ENCODE measurements at regions of chr17 and their contacts with region 1.

Region 1: DNA sequence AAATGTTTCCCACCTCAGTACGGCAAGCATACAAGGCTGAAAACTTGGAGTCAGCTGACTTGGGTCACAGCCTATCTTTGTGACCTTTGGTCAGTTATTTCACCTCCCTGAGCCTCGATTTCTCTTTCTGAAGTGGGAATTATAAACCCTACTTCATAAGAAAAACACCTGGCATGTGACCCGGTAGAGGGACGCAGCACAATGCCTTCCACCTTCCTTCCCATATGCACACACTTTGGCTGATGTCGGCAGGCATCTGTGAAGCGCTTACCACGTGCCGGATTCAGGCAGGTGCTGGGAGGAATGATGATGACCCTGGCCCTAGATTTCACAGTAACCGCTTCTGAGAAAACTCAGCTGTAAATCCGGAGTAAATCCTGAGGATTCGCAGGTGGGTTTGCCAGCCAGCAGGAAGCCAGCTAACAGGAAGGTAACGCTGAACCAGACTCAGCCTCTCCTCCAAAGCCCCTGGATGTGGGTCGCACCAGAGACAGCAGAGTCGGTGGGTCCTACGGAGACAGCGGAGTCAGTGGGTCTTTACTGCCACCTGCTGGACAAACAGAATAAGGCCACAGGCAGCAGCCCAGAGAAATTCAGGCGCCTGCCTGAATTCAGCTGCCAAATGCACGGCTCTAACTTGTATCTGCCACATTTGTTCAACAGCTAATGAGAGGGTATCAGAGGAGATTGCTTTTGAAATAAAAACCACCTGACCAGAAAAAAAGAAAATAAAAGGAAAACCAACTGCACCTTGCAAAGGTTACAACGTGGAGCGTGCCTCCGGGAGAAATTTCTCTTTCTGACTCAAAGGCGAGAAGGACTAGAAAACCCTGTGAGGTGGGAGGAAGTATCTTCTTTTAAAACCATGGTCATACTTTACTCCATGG is 16.6 kb downstream of the COPRS start:
- DNase-seq: no peak
- ATAC-seq: peak; percentile 96
- H3K4me3 ChIP-seq: no peak overlapping the region
- H3K27ac ChIP-seq: no peak overlapping the region
- H3K4me1 ChIP-seq: no peaks in the 10 kb centered on the region
- H3K27me3 ChIP-seq: no peaks in the 10 kb centered on the region
- CTCF ChIP-seq: peak; percentile 90 to 95 (median 92)
- EP300 ChIP-seq: no peak
- POLR2A ChIP-seq: no peak
- RAD21 ChIP-seq: peak; percentile 96

Region 2: DNA sequence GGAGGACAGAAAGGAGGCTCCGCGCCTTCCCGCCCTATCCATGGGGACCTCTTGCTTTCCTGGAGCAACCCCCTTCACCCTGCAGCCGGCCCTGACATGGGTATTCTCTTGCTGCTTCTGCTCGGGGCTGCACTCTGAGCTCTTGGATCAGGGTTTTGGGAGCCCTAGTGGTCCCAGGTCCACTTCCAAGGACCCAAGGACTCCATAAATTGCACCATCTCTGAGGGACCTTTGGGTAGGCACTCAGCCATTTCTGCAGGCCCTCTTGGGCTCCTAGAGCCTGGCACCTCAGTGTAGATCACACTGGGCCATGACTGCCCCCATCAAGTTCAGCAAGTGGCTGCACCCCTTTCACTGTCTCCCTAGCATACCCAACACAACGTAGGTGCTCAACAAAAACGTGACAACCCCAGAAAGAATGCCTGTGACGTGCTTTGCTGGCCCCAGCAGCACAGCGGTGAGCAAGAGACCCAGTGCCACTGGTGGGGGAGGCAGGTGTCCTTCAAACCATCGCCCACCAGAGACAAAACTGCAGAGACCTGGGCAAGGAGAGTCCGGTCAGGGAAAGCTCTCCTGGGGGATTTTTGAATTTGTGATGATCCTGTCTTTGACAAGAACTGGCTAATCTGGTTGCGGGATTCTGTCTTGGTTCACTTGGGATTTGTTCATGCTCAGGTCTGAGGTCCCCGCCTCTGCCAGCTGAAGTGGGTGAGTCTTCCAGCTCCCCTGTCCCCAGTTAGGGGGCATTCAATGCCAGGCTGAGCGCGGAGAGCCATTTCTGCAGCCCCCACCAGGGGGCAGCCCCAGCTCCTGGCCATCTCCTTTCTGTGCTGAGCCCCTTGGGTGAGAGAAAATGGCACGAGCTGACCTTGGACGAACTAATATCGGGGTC is 453.4 kb before region 1 on chr17:
- CTCF ChIA-PET with region 1: interaction called, 4 read pairs
- POLR2A ChIA-PET with region 1: no interaction called
- RAD21 ChIA-PET with region 1: no interaction called
- SMC1A ChIA-PET with region 1: interaction called, 3 read pairs
- in situ Hi-C with region 1: no loop called
- intact Hi-C with region 1: loop called (anchors 5 kb)
- DNase-seq: no peak
- ATAC-seq: peak; percentile 85
- H3K4me3 ChIP-seq: no peak overlapping the region
- H3K27ac ChIP-seq: no peak overlapping the region
- H3K4me1 ChIP-seq: no peaks in the 10 kb centered on the region
- H3K27me3 ChIP-seq: peaks cover 12% of the 10 kb centered on the region in 2 experiments
- CTCF ChIP-seq: peak; percentile 57 to 88 (median 71)
- EP300 ChIP-seq: no peak
- POLR2A ChIP-seq: no peak
- RAD21 ChIP-seq: peak; percentile 58

Region 3: DNA sequence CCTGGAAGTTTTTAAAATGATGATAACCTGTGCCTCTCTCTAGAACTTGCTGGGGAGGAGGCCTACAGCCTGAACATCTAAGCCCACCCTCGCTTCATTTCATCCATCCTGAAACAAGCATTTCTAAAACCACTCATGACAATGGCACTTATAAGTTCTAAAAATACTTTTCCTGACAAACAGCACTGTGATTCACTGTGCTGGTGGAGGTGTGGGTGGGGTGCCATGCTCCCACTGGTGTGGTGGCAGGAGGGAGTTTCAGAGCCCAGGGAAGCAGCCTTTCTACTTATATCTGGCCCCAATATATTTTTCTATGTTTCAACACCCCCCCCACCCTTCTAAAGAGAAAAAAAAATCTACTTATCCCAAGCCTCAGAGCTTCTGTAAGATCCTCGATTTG is 398.4 kb before region 1 on chr17:
- CTCF ChIA-PET with region 1: interaction called, 21 read pairs
- POLR2A ChIA-PET with region 1: no interaction called
- RAD21 ChIA-PET with region 1: interaction called, 6 read pairs
- SMC1A ChIA-PET with region 1: interaction called, 17 read pairs
- in situ Hi-C with region 1: loop called (anchors 5 kb)
- intact Hi-C with region 1: no loop called
- DNase-seq: no peak
- ATAC-seq: no peak
- H3K4me3 ChIP-seq: no peak overlapping the region
- H3K27ac ChIP-seq: no peak overlapping the region
- H3K4me1 ChIP-seq: no peaks in the 10 kb centered on the region
- H3K27me3 ChIP-seq: no peaks in the 10 kb centered on the region
- CTCF ChIP-seq: no peak
- EP300 ChIP-seq: no peak
- POLR2A ChIP-seq: no peak
- RAD21 ChIP-seq: no peak

Region 4: GRCh38 chr17:31533546-31534155 is 308.8 kb before region 1 on chr17:
- CTCF ChIA-PET with region 1: interaction called, 85 read pairs
- POLR2A ChIA-PET with region 1: interaction called, 9 read pairs
- RAD21 ChIA-PET with region 1: interaction called, 65 read pairs
- SMC1A ChIA-PET with region 1: interaction called, 78 read pairs
- in situ Hi-C with region 1: loop called (anchors 10 kb)
- intact Hi-C with region 1: loop called (anchors 5 kb)
- DNase-seq: no peak
- ATAC-seq: no peak
- H3K4me3 ChIP-seq: no peak overlapping the region
- H3K27ac ChIP-seq: no peak overlapping the region
- H3K4me1 ChIP-seq: peaks cover 34% of the 10 kb centered on the region
- H3K27me3 ChIP-seq: no peaks in the 10 kb centered on the region
- CTCF ChIP-seq: peak; percentile 7 to 44 (median 16); a peak in 2 of 6 replicates
- EP300 ChIP-seq: no peak
- POLR2A ChIP-seq: no peak
- RAD21 ChIP-seq: peak; percentile 36; the same call in 1 of the 2 replicates

Region 5: DNA sequence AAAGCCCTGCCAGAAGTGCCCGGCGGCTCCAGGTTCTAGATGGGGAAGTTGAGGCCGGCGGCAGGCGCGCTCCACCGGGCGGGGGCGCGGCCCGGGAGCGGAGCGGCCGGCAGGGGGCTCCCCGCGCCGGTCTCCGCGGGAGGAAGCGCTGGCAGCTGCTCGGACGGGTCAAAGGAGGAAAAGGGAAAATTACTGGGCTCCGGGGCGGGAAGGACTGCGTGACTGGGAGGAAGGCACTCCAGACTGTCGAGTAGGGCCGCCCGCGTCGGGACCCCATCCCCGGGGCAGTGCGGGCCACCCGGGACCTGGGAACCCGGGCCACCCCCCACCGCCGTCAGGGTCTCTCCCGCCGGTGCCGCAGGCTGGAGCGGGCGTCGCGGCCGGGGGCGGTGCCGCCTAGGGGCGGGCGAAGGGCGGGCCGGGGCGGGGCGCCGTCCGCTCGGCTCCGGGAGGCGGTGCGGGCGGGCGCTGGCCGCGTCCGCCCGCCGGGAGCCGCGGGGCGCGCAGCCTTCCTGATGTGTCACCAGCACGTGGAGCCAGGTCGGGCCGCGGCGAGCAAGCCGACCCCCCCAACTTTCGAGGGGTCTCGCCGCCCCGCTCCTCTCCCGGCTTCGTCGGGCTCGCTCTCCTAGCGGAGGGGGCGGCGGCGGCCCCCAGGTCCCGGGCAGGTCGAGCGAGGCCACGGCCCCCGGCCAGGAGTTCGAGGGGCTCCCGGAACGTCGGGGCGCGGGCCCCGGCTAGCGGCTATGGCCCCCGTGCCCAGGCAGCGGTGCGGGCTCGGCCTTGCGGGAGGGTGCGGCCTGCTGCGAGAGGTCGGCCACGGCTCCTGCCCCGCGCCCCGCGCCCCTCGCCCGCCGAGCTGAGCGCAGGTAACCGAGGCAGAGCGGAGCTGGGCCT is 283.4 kb before region 1 on chr17:
- CTCF ChIA-PET with region 1: interaction called, 55 read pairs
- POLR2A ChIA-PET with region 1: no interaction called
- RAD21 ChIA-PET with region 1: interaction called, 14 read pairs
- SMC1A ChIA-PET with region 1: interaction called, 15 read pairs
- in situ Hi-C with region 1: loop called (anchors 5 kb)
- intact Hi-C with region 1: loop called (anchors 1 kb)
- DNase-seq: no peak
- ATAC-seq: peak; percentile 96
- H3K4me3 ChIP-seq: peak overlapping the region; percentile 32; the same call in 1 of the 2 replicates
- H3K27ac ChIP-seq: no peak overlapping the region
- H3K4me1 ChIP-seq: no peaks in the 10 kb centered on the region
- H3K27me3 ChIP-seq: peaks cover 0 to 7% of the 10 kb centered on the region in 2 experiments; a peak in 3 of 4 replicates
- CTCF ChIP-seq: peak; percentile 60 to 68 (median 61); a peak in 5 of 6 replicates
- EP300 ChIP-seq: no peak
- POLR2A ChIP-seq: no peak
- RAD21 ChIP-seq: peak; percentile 53; the same call in 1 of the 2 replicates

Region 6: DNA sequence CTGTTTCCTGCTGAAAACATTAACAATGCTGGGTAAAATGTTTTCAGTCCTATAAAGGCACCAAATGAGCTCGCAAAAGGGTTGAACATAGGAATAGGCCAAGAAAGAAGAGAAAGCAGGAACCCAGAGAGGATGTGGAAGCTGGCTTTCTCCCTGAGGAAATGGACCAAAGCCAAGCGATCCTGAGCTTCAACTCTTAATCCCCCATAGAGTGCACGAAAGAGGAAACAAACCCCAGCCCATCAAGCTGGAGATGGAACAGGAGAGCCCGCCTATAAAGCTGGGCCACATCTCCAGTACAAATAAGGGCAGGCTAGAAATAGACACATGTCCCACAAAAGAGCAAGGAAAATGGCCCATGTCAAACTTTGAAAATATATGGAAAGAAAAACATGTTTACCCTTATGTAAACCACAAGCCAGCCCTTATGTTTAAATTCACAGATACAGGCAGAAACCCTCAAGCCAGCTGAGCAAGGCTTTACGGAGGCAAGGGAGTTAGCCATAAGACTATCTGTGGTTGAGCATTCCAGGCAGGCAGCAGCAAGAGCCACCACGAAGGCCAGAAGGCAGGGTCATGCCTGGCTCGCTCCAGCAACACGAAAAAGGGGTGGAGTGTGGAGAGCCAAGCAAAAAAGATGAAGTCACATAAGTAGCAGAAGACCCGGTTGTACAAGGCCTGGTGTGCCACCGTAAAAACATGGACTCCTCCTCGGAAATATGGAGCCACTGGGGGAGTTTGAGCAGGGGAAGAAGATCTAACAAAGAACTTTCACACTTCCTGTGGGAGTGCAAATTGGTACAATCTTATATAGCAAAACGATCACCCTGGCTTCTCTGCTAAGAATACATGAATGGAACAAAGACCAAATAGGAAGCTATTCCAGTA is 11.2 kb before region 1 on chr17:
- CTCF ChIA-PET with region 1: interaction called, 12 read pairs
- POLR2A ChIA-PET with region 1: no interaction called
- RAD21 ChIA-PET with region 1: interaction called, 3 read pairs
- SMC1A ChIA-PET with region 1: interaction called, 3 read pairs
- in situ Hi-C with region 1: no loop called
- intact Hi-C with region 1: no loop called
- DNase-seq: no peak
- ATAC-seq: no peak
- H3K4me3 ChIP-seq: no peak overlapping the region
- H3K27ac ChIP-seq: no peak overlapping the region
- H3K4me1 ChIP-seq: peaks cover 8% of the 10 kb centered on the region
- H3K27me3 ChIP-seq: no peaks in the 10 kb centered on the region
- CTCF ChIP-seq: no peak
- EP300 ChIP-seq: no peak
- POLR2A ChIP-seq: no peak
- RAD21 ChIP-seq: no peak

Region 7: GRCh38 chr17:32461853-32462617 is 619.6 kb after region 1 on chr17:
- CTCF ChIA-PET with region 1: no interaction called
- POLR2A ChIA-PET with region 1: no interaction called
- RAD21 ChIA-PET with region 1: no interaction called
- SMC1A ChIA-PET with region 1: no interaction called
- in situ Hi-C with region 1: no loop called
- intact Hi-C with region 1: no loop called
- DNase-seq: no peak
- ATAC-seq: peak; percentile 93
- H3K4me3 ChIP-seq: no peak overlapping the region
- H3K27ac ChIP-seq: no peak overlapping the region
- H3K4me1 ChIP-seq: no peaks in the 10 kb centered on the region
- H3K27me3 ChIP-seq: no peaks in the 10 kb centered on the region
- CTCF ChIP-seq: peak; percentile 35 to 64 (median 59); a peak in 5 of 6 replicates
- EP300 ChIP-seq: no peak
- POLR2A ChIP-seq: no peak
- RAD21 ChIP-seq: peak; percentile 42

Region 8: DNA sequence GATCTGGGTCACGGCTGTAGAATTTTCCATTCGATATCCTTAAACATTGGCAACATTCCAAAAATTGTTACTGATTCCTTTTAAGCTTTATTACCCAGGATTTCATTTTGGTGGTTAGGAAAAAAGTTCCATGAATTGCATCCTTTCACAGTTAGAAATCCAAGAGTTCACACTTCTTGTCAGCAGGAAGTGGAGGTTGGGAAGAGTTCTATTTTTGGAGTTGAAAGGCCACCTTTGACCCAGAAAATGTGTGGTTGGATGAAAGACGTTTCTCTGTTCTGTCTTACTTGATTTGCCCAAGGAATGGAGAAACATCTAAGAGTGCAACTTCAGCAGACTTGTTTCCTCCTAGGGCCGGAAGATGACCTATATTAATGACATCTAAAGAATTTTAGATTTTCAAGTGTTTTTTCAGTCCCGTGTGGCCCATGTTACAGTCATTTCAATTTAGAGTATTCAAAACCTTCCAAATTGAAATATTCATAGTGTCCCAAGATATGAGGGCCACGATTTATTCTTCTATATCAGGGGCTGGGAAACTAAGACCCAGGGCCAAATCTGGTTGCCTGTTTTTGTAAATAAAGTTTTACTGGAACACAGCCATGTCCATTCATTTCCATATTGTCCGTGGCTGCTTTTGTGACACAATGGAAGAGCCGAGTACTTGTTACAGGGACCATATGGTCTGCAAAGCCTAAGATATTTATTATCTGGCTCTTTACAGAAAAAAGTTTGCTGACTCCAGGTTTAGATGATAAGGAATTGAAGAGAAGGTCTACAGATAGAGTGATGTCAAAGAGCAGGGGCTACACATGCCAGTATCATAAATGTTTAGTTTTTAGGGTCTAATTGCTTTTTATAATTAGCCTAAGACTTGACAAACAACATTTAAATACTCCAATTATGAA is 694.6 kb after region 1 on chr17:
- CTCF ChIA-PET with region 1: no interaction called
- POLR2A ChIA-PET with region 1: no interaction called
- RAD21 ChIA-PET with region 1: no interaction called
- SMC1A ChIA-PET with region 1: no interaction called
- in situ Hi-C with region 1: no loop called
- intact Hi-C with region 1: no loop called
- DNase-seq: no peak
- ATAC-seq: no peak
- H3K4me3 ChIP-seq: no peak overlapping the region
- H3K27ac ChIP-seq: no peak overlapping the region
- H3K4me1 ChIP-seq: no peaks in the 10 kb centered on the region
- H3K27me3 ChIP-seq: no peaks in the 10 kb centered on the region
- CTCF ChIP-seq: no peak
- EP300 ChIP-seq: no peak
- POLR2A ChIP-seq: no peak
- RAD21 ChIP-seq: no peak

Measured in GM12878 (cell line).